HEK293 (cell line): ENCODE measurements at regions of chr4 and their contacts with region 1.

Region 1: DNA sequence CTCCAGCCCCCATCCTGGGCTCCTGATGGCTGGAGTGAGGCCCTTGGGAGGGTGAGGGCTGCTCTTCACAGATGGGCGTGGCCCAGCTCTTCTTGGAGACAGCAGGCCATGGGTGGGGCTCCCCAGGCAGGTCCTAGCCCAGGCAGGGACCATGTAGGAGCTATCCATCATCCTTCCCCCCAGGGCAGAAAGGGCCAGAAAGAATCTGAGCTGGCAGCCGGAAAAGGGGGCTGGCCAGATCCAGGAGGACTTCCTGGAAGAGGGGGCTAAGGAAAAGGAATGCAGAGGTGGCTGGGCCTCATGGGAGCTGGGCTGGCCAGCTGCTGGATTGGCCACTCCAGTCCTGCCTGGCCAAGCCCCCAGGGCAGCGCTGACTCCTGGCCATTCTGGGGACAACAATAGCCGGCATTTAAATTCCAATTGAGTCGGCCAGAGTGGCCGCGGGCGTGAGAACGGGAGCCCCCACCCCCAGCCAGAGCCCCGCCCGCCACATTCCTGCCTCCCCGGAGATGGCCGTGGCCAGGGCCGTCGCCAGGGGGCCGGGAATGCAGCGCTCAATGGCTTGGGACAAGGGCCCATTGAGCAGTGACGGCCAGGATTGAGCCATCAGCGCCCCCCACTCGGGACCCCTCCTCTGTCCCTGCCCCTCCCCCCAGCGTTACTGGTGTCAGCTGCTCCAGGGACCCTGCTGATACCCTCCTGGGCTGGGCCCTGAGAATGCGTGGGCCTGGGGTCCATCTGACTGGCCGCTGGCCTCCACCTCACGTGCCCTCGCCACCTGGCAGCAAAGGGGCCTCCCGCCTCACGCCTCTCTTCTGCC is 15.1 kb upstream of the FGFR3 start:
- H3K4me3 ChIP-seq: no peak overlapping the region
- H3K27ac ChIP-seq: no peak overlapping the region
- H3K4me1 ChIP-seq: no peaks in the 10 kb centered on the region
- CTCF ChIP-seq: no peak

Region 2: GRCh38 chr4:1767770-1768366 is 10.2 kb before region 1 on chr4:
- CTCF ChIA-PET with region 1: interaction called, 4 read pairs
- POLR2A ChIA-PET with region 1: interaction called, 12 read pairs
- H3K4me3 ChIP-seq: peak overlapping the region; percentile 26
- H3K27ac ChIP-seq: no peak overlapping the region
- H3K4me1 ChIP-seq: no peaks in the 10 kb centered on the region
- CTCF ChIP-seq: no peak

Region 3: GRCh38 chr4:1792832-1793495 is 14.9 kb after region 1 on chr4 and contains the start of gene FGFR3:
- CTCF ChIA-PET with region 1: interaction called, 4 read pairs
- POLR2A ChIA-PET with region 1: interaction called, 25 read pairs
- H3K4me3 ChIP-seq: peak within 1 kb of the TSS; percentile 63
- H3K27ac ChIP-seq: peak within 1 kb of the TSS; percentile 69; the same call in 1 of the 2 replicates
- H3K4me1 ChIP-seq: no peaks in the 10 kb centered on the region
- CTCF ChIP-seq: no peak

Region 4: DNA sequence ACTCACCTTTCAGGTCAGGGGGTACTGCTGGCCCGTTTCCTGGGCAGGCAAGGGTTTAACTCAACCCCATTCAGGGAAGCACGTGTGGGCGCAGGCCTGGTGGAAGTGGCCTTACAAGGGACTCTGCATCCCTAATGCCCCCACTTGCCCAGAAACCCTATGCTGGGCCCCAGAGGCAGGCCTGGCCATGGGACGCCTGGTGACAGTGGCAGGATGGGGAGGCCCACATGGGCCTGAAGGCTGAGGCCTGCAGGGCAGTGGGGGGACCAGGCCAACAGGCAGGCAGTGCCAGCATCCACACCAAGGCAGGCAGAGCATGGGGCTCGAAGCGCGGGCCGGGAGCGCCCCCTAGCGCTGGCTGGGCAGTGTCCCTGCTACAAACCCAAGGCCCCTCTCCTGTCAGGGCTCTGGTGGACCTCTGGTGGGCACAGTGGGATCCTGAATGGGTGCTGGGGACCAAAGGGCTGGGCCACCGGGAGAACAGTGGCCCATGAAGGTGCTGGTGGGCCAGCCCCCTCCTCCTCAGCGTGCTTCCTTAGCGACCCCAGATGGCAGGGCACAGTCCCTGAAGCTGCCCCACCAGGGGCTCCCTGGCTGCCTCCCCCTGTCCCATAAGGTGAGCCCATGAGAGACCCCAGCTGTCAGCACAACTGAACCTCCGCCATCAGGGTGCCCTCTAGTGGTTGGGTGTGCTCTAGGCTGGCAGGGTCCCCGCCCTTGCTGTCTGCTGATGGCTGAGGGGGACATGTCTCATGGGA is 31.9 kb after region 1 on chr4:
- CTCF ChIA-PET with region 1: interaction called, 10 read pairs
- POLR2A ChIA-PET with region 1: no interaction called
- H3K4me3 ChIP-seq: no peak overlapping the region
- H3K27ac ChIP-seq: no peak overlapping the region
- H3K4me1 ChIP-seq: no peaks in the 10 kb centered on the region
- CTCF ChIP-seq: peak; percentile 95